ENCODE measurements at regions of chr10 and their contacts with region 1.

Region 1: DNA sequence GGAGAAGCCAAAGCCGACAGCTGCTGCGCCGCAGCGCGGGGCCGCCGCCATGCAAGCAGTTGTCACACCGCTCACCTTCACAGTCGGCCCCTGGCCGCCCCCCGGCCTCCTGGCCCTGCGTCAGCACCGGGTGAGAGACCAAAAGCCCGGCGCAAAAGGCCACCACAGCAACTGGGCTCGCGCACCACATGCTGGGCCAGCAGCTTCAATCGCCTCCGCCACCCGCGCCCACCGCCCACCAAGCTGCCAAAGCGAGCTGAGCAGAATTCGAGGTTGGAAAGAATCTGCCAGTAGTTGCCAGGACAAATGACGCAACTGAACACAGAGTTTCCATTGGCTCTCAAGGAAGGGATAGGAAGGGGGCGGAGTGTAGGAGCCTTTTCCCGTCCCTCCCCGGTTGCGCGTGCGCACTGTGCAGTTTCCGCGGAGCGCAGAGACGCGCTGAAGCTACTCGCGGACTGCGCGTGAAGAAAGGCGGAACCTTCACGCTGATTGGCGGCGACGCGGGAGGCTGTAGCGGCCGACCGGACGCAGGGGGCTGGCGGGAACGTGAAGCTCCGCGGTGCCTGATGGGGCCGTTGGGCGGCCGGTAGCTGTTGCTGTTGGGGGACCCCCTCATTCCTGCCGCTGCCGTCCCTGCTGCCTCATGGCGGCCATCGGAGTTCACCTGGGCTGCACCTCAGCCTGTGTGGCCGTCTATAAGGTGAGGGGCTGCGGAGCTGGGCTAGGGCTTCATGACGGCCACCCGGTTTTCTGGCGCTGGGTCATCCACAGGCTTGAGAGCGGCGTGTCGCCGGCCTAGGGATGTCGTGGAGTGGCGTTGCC is at the starts of genes CDNF, HSPA14 and MSANTD7:
- DNase-seq: peak; percentile 99
- H3K4me3 Mint-ChIP-seq: peak within 1 kb of the TSS; percentile 76
- H3K27ac Mint-ChIP-seq: peak within 1 kb of the TSS; percentile 91
- H3K4me1 Mint-ChIP-seq: no peaks in the 10 kb centered on the region
- H3K27me3 Mint-ChIP-seq: no peaks in the 10 kb centered on the region
- CTCF ChIP-seq: no peak
- total RNA-seq, gene CDNF: 1.9 and 2.9 TPM in 2 replicates
- total RNA-seq, gene HSPA14: 12.1 and 14.0 TPM in 2 replicates
- total RNA-seq, gene MSANTD7: 17.2 and 18.1 TPM in 2 replicates

Region 2: DNA sequence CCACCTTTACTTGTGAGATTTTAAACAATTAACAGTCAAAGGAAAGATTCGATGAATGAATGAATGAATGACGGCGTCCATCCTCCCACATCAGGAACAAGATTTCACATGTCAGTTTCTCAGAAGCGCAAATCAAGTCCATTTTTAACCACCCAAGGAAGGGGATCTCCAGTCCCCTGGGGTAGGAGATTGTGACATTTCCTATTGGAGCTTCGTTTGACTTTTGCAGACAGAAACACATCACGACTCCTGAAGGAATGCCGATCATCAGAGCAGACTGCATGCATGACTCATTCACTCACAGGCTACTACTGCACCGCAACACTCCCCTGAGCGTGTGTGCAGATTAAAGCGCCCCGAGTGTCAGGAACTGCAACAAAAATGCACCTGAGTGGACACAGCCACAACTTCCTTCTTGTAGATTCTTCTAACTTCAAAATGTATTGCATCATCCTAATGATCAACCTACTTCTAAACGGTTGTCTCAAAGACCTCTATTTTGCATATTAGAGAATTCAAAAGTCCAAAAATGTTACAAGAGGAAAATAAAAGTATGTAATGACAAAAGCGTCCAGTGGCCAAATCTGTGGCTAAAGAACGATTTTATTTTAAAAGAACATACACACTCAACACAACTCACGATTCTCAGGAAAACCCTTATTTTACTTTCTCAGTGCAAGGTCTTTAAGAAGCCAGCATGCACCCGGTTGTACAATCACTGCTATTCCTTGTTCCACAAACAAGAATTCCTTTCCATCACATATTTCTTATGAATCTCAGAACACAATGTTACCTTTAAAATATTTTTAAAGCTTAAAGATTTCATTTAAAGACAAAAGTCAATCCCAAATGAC is 235.9 kb before region 1 on chr10:
- CTCF ChIA-PET with region 1: no interaction called
- POLR2A ChIA-PET with region 1: interaction called, 9 read pairs
- intact Hi-C with region 1: loop called (anchors 2 kb)
- DNase-seq: peak; percentile 84
- H3K4me3 Mint-ChIP-seq: peak overlapping the region; percentile 85
- H3K27ac Mint-ChIP-seq: no peak overlapping the region
- H3K4me1 Mint-ChIP-seq: peaks cover 36% of the 10 kb centered on the region
- H3K27me3 Mint-ChIP-seq: no peaks in the 10 kb centered on the region
- CTCF ChIP-seq: no peak

Region 3: DNA sequence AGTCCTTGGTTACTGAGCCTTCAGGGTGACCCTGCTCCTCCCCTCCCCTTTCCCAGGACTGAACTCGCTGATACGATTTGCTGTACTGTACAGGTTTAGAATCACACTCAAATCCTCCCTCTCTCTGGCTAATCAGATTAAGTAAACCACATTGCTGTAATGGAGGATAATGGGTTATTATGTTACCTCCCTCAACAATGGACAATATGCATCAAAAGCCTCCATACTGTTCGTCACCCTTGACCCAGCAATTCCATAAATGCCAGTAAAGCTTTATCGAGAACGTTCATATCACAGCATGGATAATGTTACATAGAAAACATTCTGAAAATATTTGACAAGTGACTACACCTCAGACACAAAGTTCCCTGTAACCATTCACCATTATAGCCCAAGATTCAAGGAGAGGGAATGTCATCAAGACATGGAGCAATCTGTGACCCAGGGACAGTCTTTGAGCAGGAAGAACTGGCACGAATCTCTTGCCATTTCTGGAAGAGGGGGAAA is 124.9 kb before region 1 on chr10:
- CTCF ChIA-PET with region 1: no interaction called
- POLR2A ChIA-PET with region 1: no interaction called
- intact Hi-C with region 1: no loop called
- DNase-seq: no peak
- H3K4me3 Mint-ChIP-seq: no peak overlapping the region
- H3K27ac Mint-ChIP-seq: no peak overlapping the region
- H3K4me1 Mint-ChIP-seq: no peaks in the 10 kb centered on the region
- H3K27me3 Mint-ChIP-seq: no peaks in the 10 kb centered on the region
- CTCF ChIP-seq: no peak

Region 4: DNA sequence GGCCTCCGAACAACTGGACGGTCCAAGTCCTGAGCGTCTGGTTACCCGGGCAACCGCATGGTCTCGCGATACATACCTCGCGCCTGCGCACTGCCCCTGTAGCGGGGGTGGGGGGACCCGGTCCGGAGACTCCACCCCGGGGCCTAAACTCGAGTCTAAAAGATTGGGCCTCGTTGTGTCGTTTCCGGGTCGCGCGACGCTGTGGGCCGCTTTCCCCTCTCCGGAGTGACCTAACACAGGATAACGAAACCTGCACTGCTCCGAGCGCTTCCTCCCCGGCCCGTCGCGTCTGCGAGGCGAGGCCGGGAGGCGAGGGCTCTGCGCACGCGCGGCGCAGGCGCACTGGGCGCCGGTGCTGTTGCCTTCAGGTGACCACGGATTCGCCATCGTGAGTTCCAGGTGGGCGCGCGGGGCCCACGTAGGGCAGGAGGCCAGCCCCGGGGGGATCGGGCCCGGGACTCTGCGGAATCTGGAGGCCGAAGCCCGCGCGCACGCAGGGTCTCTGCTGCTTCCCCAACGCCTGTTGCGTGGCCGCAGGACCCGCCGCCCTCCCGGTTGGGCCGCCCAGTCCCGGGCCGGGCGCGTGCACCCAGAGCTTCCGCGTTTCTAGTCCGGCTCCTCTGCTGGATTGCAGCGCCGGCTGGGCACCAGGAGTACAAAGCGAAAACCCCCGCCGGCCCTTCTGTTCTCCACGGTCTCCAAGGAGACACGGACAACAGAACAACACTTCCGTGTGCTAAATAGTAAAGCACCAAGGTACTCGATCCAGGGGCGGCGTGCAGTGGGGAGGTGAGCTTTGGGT is 259.2 kb after region 1 on chr10 and contains the start of gene RPP38:
- CTCF ChIA-PET with region 1: no interaction called
- POLR2A ChIA-PET with region 1: interaction called, 3 read pairs
- intact Hi-C with region 1: loop called (anchors 5 kb)
- DNase-seq: peak; percentile 96
- H3K4me3 Mint-ChIP-seq: peak within 1 kb of the TSS; percentile 94
- H3K27ac Mint-ChIP-seq: peak within 1 kb of the TSS; percentile 92
- H3K4me1 Mint-ChIP-seq: peaks cover 16% of the 10 kb centered on the region
- H3K27me3 Mint-ChIP-seq: no peaks in the 10 kb centered on the region
- CTCF ChIP-seq: no peak
- total RNA-seq, gene RPP38: 26.4 and 30.8 TPM in 2 replicates

Measured in MCF 10A (cell line).